A673 (cell line): ENCODE measurements at regions of chr1 and their contacts with region 1.

Region 1: GRCh38 chr1:152189657-152190442 is 30.8 kb upstream of the RPTN start:
- DNase-seq: peak; percentile 88
- H3K4me3 ChIP-seq: peak overlapping the region; percentile 46
- H3K27ac ChIP-seq: no peak overlapping the region
- H3K4me1 ChIP-seq: no peaks in the 10 kb centered on the region
- H3K27me3 ChIP-seq: no peaks in the 10 kb centered on the region
- CTCF ChIP-seq: peak; percentile 82

Region 2: DNA sequence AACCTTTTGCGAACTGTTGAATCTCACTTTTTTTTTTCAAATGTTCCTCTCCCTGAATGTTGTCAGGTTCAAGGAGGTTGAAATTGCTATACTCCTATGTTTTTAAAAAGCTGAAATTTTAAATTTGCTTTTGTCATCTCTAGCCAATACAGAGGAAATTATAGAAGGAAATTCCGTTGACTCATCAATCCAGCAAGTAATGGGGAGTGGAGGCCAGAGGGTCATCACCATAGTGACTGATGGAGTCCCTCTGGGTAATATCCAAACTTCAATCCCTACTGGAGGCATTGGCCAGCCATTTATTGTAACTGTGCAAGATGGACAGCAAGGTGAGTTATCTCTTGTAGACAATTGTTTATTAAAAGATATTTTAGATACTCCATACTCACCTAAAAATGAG is 1083.0 kb before region 1 on chr1:
- CTCF ChIA-PET with region 1: no interaction called
- POLR2A ChIA-PET with region 1: no interaction called
- intact Hi-C with region 1: no loop called
- DNase-seq: no peak
- H3K4me3 ChIP-seq: no peak overlapping the region
- H3K27ac ChIP-seq: no peak overlapping the region
- H3K4me1 ChIP-seq: no peaks in the 10 kb centered on the region
- H3K27me3 ChIP-seq: no peaks in the 10 kb centered on the region
- CTCF ChIP-seq: no peak

Region 3: GRCh38 chr1:152052606-152053005 is 137.2 kb before region 1 on chr1:
- CTCF ChIA-PET with region 1: interaction called, 11 read pairs
- POLR2A ChIA-PET with region 1: no interaction called
- intact Hi-C with region 1: loop called (anchors 1 kb)
- DNase-seq: peak; percentile 85
- H3K4me3 ChIP-seq: no peak overlapping the region
- H3K27ac ChIP-seq: no peak overlapping the region
- H3K4me1 ChIP-seq: peaks cover 10% of the 10 kb centered on the region
- H3K27me3 ChIP-seq: peaks cover 48% of the 10 kb centered on the region
- CTCF ChIP-seq: peak; percentile 95

Region 4: DNA sequence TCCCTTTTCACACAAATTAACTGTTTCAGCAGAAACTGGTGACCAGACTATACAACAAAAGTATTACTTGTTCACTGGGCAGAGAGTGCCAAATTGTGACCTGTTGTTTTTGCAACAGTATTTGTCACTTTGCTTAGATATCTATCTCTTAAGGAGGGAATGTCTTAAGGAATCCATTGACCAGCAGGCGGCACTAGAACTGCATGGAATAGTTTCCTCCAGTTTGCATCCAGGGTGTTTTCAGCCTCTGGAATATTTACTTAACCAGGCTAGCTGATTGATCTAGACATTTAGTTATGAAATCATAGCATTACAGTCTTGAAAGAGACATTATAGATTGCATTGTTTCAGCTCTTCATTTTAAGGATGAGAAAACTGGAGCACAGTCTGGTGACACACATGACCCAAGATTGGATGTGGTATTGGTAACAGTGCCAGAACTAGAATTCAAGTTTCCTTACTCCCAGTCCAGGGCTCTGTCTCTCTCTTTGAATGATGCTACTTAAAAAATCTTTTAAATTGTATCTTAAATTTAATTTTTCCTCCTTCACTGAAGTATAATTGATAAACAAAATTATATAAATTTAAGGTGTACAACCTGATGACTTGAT is 47.8 kb before region 1 on chr1:
- CTCF ChIA-PET with region 1: no interaction called
- POLR2A ChIA-PET with region 1: no interaction called
- intact Hi-C with region 1: loop called (anchors 1 kb)
- DNase-seq: peak; percentile 73
- H3K4me3 ChIP-seq: no peak overlapping the region
- H3K27ac ChIP-seq: no peak overlapping the region
- H3K4me1 ChIP-seq: no peaks in the 10 kb centered on the region
- H3K27me3 ChIP-seq: no peaks in the 10 kb centered on the region
- CTCF ChIP-seq: peak; percentile 82

Region 5: GRCh38 chr1:152347116-152347728 is 157.4 kb after region 1 on chr1:
- CTCF ChIA-PET with region 1: no interaction called
- POLR2A ChIA-PET with region 1: no interaction called
- intact Hi-C with region 1: loop called (anchors 1 kb)
- DNase-seq: peak; percentile 71
- H3K4me3 ChIP-seq: no peak overlapping the region
- H3K27ac ChIP-seq: no peak overlapping the region
- H3K4me1 ChIP-seq: no peaks in the 10 kb centered on the region
- H3K27me3 ChIP-seq: peaks cover 5% of the 10 kb centered on the region
- CTCF ChIP-seq: peak; percentile 89

Region 6: GRCh38 chr1:152440635-152441471 is 251.0 kb after region 1 on chr1:
- CTCF ChIA-PET with region 1: interaction called, 3 read pairs
- POLR2A ChIA-PET with region 1: no interaction called
- intact Hi-C with region 1: loop called (anchors 5 kb)
- DNase-seq: peak; percentile 83
- H3K4me3 ChIP-seq: no peak overlapping the region
- H3K27ac ChIP-seq: no peak overlapping the region
- H3K4me1 ChIP-seq: no peaks in the 10 kb centered on the region
- H3K27me3 ChIP-seq: peaks cover 7% of the 10 kb centered on the region
- CTCF ChIP-seq: peak; percentile 87

Region 7: GRCh38 chr1:152459596-152460528 is 270.0 kb after region 1 on chr1:
- CTCF ChIA-PET with region 1: interaction called, 20 read pairs
- POLR2A ChIA-PET with region 1: no interaction called
- intact Hi-C with region 1: loop called (anchors 1 kb)
- DNase-seq: peak; percentile 73
- H3K4me3 ChIP-seq: no peak overlapping the region
- H3K27ac ChIP-seq: no peak overlapping the region
- H3K4me1 ChIP-seq: no peaks in the 10 kb centered on the region
- H3K27me3 ChIP-seq: no peaks in the 10 kb centered on the region
- CTCF ChIP-seq: peak; percentile 89